Adrenal gland (tissue), 19 donors: ENCODE measurements at regions of chr7 and their contacts with region 1.

Region 1: DNA sequence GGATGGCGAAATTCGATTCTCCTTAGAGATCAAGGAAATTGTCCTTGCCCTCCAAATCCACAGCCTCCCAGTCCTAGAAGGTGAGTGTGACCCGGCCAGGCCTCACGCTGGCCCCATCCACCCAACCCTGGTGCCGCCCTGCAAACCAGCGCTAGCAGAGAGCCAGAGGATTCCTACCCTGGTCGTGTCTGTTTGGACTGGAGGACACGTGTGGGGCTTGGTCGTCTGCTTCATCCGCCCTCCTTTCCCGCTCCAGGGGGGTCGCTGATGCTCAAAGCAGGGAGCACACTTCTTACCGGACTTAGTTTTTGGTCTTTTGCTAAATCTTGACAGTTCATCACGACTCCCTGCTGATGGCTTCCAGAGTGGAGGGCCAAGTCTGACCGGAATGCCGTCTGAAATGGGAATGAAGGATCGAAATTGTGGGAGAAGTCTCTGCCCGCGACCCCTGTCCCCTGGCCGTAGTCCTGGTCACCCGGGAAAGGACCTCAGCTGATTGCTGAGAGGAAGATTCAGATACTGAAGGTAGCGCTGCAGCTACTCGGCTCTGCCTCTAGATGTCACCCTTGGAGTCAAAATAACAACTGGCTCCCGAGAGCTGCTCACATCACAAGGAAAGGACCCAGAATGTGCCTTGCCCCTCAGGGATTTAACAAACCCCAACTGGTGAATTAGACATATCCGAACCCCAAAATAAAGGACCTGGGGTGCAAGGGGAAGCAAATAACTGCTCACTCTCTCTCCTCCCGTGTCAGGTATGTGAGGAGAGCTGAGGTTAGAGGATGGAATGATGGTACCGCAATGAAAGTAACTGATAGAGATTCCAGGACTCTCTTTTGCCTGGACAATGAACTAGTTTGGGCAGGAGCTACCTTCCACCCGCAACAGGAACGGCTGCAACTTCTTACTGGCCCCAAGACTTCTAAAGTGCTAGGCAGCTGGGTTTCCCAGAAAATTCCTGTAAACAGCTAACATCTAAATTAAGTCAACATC is 23.5 kb upstream of the ORC5 start:
- DNase-seq: peak; percentile 30 to 72 (median 56)
- H3K4me3 ChIP-seq: no peak overlapping the region
- H3K27ac ChIP-seq: no peak overlapping the region
- H3K4me1 ChIP-seq: no peaks in the 10 kb centered on the region
- H3K27me3 ChIP-seq: no peaks in the 10 kb centered on the region
- CTCF ChIP-seq: peak; percentile 62 to 76 (median 68)
- POLR2A ChIP-seq: no peak

Region 2: DNA sequence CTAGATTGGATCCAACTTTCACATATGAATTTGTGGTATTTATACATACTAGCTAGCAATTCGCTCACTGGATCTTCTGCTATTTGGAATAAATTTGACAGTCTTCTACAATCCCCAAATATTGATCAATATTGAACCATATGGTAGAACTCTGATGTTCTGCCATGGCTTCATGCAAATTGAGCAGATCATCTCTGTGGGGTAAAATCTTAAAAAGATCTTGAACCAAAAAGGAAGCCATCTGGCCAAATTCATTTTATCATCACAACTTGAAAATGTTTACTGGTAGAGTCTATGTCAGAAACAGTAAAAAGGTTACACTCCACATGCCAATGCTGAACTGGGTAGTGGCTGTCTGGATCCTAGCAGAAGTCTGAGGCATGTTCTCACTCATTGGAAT is 177.0 kb after region 1 on chr7:
- intact Hi-C with region 1: no loop called
- DNase-seq: no peak
- H3K4me3 ChIP-seq: no peak overlapping the region
- H3K27ac ChIP-seq: no peak overlapping the region
- H3K4me1 ChIP-seq: no peaks in the 10 kb centered on the region
- H3K27me3 ChIP-seq: no peaks in the 10 kb centered on the region
- CTCF ChIP-seq: no peak
- POLR2A ChIP-seq: no peak

Region 3: GRCh38 chr7:104848138-104848990 is 617.0 kb after region 1 on chr7:
- intact Hi-C with region 1: loop called (anchors 10 kb)
- DNase-seq: peak; percentile 32 to 72 (median 54)
- H3K4me3 ChIP-seq: no peak overlapping the region
- H3K27ac ChIP-seq: no peak overlapping the region
- H3K4me1 ChIP-seq: no peaks in the 10 kb centered on the region
- H3K27me3 ChIP-seq: no peaks in the 10 kb centered on the region
- CTCF ChIP-seq: peak; percentile 66 to 91 (median 79)
- POLR2A ChIP-seq: no peak

Region 4: GRCh38 chr7:104923010-104923421 is 691.7 kb after region 1 on chr7:
- intact Hi-C with region 1: loop called in 1 of 2 experiments (anchors 5 kb)
- DNase-seq: peak; percentile 66 to 89 (median 81)
- H3K4me3 ChIP-seq: no peak overlapping the region
- H3K27ac ChIP-seq: peak overlapping the region in 2 of 5 donors; percentile 2 to 27
- H3K4me1 ChIP-seq: no peaks in the 10 kb centered on the region
- H3K27me3 ChIP-seq: no peaks in the 10 kb centered on the region
- CTCF ChIP-seq: peak; percentile 53 to 78 (median 73)
- POLR2A ChIP-seq: no peak